ENCODE measurements at regions of chr4 and their contacts with region 1.

Region 1: GRCh38 chr4:151567056-151567455 is 158.1 kb downstream of the FHIP1A start:
- DNase-seq: no peak
- ATAC-seq: no peak
- H3K4me3 ChIP-seq: no peak overlapping the region
- H3K4me3 Mint-ChIP-seq: no peak overlapping the region
- H3K27ac ChIP-seq: no peak overlapping the region
- H3K27ac Mint-ChIP-seq: no peak overlapping the region
- H3K4me1 ChIP-seq: peaks cover 9% of the 10 kb centered on the region
- H3K4me1 Mint-ChIP-seq: peaks cover 7% of the 10 kb centered on the region
- H3K27me3 ChIP-seq: no peaks in the 10 kb centered on the region
- H3K27me3 Mint-ChIP-seq: peaks cover 29% of the 10 kb centered on the region
- CTCF ChIP-seq: no peak

Region 2: DNA sequence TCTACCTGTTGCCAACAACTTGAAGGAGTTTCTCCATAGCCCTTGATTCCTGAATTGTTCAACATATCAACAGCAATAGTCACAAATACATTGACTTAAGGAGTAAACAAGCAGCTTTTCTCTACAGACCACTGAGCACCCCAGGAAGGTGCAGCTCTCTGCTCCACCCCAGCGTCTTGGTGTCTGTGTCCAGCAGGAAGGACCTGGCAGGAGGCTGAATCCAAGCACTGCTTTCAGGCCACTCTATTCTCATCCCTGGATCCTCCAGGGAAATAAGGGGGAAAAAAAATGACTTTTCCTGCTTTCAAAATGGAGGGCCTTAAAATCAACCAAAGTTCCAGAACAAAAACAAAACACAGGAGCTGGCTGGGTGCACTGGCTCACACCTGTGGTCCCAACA is 1145.4 kb before region 1 on chr4:
- CTCF ChIA-PET with region 1: no interaction called
- POLR2A ChIA-PET with region 1: no interaction called
- intact Hi-C with region 1: loop called in 1 of 2 experiments (anchors 10 kb)
- DNase-seq: no peak
- ATAC-seq: no peak
- H3K4me3 ChIP-seq: no peak overlapping the region
- H3K4me3 Mint-ChIP-seq: no peak overlapping the region
- H3K27ac ChIP-seq: no peak overlapping the region
- H3K27ac Mint-ChIP-seq: no peak overlapping the region
- H3K4me1 ChIP-seq: no peaks in the 10 kb centered on the region
- H3K4me1 Mint-ChIP-seq: no peaks in the 10 kb centered on the region
- H3K27me3 ChIP-seq: no peaks in the 10 kb centered on the region
- H3K27me3 Mint-ChIP-seq: no peaks in the 10 kb centered on the region
- CTCF ChIP-seq: no peak

Region 3: GRCh38 chr4:151173871-151174270 is 393.2 kb before region 1 on chr4:
- CTCF ChIA-PET with region 1: no interaction called
- POLR2A ChIA-PET with region 1: no interaction called
- intact Hi-C with region 1: no loop called
- DNase-seq: no peak
- ATAC-seq: no peak
- H3K4me3 ChIP-seq: no peak overlapping the region
- H3K4me3 Mint-ChIP-seq: no peak overlapping the region
- H3K27ac ChIP-seq: no peak overlapping the region
- H3K27ac Mint-ChIP-seq: no peak overlapping the region
- H3K4me1 ChIP-seq: no peaks in the 10 kb centered on the region
- H3K4me1 Mint-ChIP-seq: no peaks in the 10 kb centered on the region
- H3K27me3 ChIP-seq: no peaks in the 10 kb centered on the region
- H3K27me3 Mint-ChIP-seq: peaks cover 12% of the 10 kb centered on the region
- CTCF ChIP-seq: no peak

Region 4: GRCh38 chr4:151356510-151356909 is 210.5 kb before region 1 on chr4:
- CTCF ChIA-PET with region 1: no interaction called
- POLR2A ChIA-PET with region 1: no interaction called
- intact Hi-C with region 1: no loop called
- DNase-seq: no peak
- ATAC-seq: no peak
- H3K4me3 ChIP-seq: no peak overlapping the region
- H3K4me3 Mint-ChIP-seq: no peak overlapping the region
- H3K27ac ChIP-seq: no peak overlapping the region
- H3K27ac Mint-ChIP-seq: no peak overlapping the region
- H3K4me1 ChIP-seq: no peaks in the 10 kb centered on the region
- H3K4me1 Mint-ChIP-seq: no peaks in the 10 kb centered on the region
- H3K27me3 ChIP-seq: no peaks in the 10 kb centered on the region
- H3K27me3 Mint-ChIP-seq: peaks cover 14% of the 10 kb centered on the region
- CTCF ChIP-seq: no peak